GM12878 (cell line): ENCODE measurements at regions of chr5 and their contacts with region 1.

Region 1: DNA sequence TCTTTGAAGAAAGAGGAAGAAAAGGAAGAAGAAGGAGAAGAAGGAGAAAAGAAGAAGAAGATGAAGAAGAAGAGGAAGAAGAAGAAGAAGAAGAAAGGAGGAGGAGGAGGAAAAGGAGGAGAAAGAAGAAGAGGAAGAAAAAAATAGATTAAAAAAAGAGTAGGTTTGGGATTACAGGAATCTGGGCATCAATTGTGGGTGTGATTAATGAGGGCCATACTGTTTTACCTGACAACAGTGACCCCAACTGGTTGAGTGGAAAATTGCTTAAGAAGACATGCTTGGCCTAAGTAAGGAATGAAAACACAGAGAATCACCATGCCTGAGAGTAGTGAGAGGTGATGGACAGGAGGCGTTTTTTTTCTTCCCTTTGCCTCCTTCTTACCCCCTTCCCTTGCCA is 114.6 kb downstream of the FAM170A start:
- DNase-seq: peak; percentile 48
- ATAC-seq: peak; percentile 93
- H3K4me3 ChIP-seq: no peak overlapping the region
- H3K27ac ChIP-seq: no peak overlapping the region
- H3K4me1 ChIP-seq: no peaks in the 10 kb centered on the region
- H3K27me3 ChIP-seq: no peaks in the 10 kb centered on the region; a peak in 1 of 4 replicates
- CTCF ChIP-seq: peak; percentile 62 to 73 (median 73); a peak in 5 of 6 replicates
- EP300 ChIP-seq: no peak
- POLR2A ChIP-seq: no peak
- RAD21 ChIP-seq: peak; percentile 76

Region 2: GRCh38 chr5:119578937-119579336 is 165.0 kb before region 1 on chr5:
- CTCF ChIA-PET with region 1: interaction called, 3 read pairs
- POLR2A ChIA-PET with region 1: no interaction called
- RAD21 ChIA-PET with region 1: no interaction called
- SMC1A ChIA-PET with region 1: no interaction called
- in situ Hi-C with region 1: no loop called
- intact Hi-C with region 1: loop called (anchors 2 kb)
- DNase-seq: no peak
- ATAC-seq: peak; percentile 98
- H3K4me3 ChIP-seq: no peak overlapping the region
- H3K27ac ChIP-seq: no peak overlapping the region
- H3K4me1 ChIP-seq: no peaks in the 10 kb centered on the region
- H3K27me3 ChIP-seq: no peaks in the 10 kb centered on the region
- CTCF ChIP-seq: peak; percentile 21 to 36 (median 27); a peak in 3 of 6 replicates
- EP300 ChIP-seq: no peak
- POLR2A ChIP-seq: no peak
- RAD21 ChIP-seq: peak; percentile 22; the same call in 1 of the 2 replicates

Region 3: DNA sequence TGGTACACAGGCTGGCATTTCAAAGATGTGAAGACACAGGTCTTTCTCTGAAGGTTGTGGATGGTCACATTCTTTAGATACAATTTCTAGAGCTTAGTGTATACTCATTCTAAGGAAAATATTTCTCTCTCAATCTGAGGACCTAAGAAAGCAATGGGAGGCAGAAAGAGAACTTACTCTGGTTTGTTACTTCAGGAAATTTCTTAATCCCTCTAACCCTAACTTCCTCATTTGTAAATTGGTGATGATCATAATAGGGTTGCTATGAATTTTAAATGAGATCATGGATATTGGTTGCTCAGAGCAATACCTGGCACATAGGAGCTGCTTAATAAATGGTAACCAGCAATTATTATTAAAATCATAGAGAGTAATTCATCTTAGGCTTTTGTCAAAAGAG is 92.4 kb before region 1 on chr5:
- CTCF ChIA-PET with region 1: no interaction called
- POLR2A ChIA-PET with region 1: no interaction called
- RAD21 ChIA-PET with region 1: no interaction called
- SMC1A ChIA-PET with region 1: no interaction called
- in situ Hi-C with region 1: no loop called
- intact Hi-C with region 1: no loop called
- DNase-seq: no peak
- ATAC-seq: no peak
- H3K4me3 ChIP-seq: no peak overlapping the region
- H3K27ac ChIP-seq: no peak overlapping the region
- H3K4me1 ChIP-seq: no peaks in the 10 kb centered on the region
- H3K27me3 ChIP-seq: no peaks in the 10 kb centered on the region
- CTCF ChIP-seq: no peak
- EP300 ChIP-seq: no peak
- POLR2A ChIP-seq: no peak
- RAD21 ChIP-seq: no peak